ENCODE measurements at regions of chr9 and their contacts with region 1.

Region 1: GRCh38 chr9:71975833-71976232 is 64.4 kb downstream of the C9orf85 start:
- DNase-seq: no peak
- H3K4me3 Mint-ChIP-seq: no peak overlapping the region
- H3K27ac Mint-ChIP-seq: no peak overlapping the region
- H3K4me1 Mint-ChIP-seq: no peaks in the 10 kb centered on the region
- H3K27me3 Mint-ChIP-seq: no peaks in the 10 kb centered on the region

Region 2: DNA sequence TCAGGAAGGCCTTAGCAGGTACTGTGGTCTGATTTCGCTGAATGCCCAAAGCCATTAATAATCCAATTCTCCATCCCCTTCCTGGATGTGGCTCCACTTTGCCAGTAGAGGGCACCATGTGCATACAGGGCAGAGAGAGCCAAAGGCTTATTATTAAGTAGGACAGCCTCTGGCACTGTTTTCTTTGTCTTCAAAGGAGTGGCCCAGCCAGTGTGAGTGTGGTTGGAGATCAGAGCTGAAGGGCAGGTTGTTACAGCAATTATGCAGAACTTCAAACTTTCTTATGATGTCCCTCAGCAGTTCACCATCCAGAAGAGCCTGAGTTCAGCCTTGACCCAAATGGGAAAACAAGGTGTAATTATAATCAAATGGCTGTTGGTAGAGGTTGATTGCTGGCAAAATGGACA is 168.9 kb before region 1 on chr9:
- intact Hi-C with region 1: loop called (anchors 2 kb)
- DNase-seq: peak; percentile 90
- H3K4me3 Mint-ChIP-seq: no peak overlapping the region
- H3K27ac Mint-ChIP-seq: no peak overlapping the region
- H3K4me1 Mint-ChIP-seq: peaks cover 4% of the 10 kb centered on the region
- H3K27me3 Mint-ChIP-seq: peaks cover 3% of the 10 kb centered on the region

Measured in activated CD4-positive, alpha-beta T cell treated with anti-CD3 and anti-CD28 coated beads, Interleukin-2, amount 10 ng/mL, durations not matched to agents 24 days and 14 days (primary cell).